Activated B cell treated with CpG ODN at 0.5 μM for 24 hours (primary cell): ENCODE measurements at regions of chr6 and their contacts with region 1.

Region 1: DNA sequence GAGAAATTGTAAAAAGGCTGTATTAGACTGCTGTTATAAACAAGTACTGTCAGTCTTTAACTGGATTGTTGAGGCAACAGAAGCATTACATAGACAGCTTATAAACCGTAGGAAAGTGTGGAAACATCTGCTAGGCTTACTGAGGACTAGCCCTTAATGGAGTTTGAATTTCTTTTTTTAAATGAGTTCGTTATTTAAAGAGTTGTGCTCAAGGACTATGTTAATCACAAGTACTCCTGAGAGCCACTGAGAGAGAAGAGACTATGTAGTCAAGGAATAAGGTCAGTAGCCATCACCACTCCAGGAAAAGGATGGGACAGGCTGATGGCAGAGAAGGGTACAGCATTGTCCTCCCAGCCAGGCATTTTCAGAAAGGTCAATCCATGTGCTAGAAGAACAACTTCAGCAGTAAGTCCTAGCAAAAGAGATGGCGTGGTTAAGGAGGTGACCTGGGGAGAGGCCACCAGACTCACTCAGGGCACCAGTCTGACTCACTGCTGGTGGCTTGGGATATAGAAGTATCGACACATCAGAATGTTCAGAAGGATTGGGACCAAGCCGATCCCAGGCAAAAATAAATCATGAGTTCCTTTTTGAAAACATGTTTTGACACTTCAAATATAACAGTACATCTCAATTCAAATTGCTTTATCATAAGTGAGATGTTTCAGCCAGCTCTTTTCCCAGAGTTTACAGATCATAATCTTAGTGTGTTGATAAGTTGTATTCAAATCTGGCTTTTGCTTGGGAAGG is 6.4 kb downstream of the RPS12 start:
- DNase-seq: no peak
- ATAC-seq: no peak
- H3K4me3 Mint-ChIP-seq: no peak overlapping the region
- H3K27ac Mint-ChIP-seq: peak overlapping the region; percentile 99
- H3K4me1 Mint-ChIP-seq: peaks cover 48% of the 10 kb centered on the region
- H3K27me3 Mint-ChIP-seq: no peaks in the 10 kb centered on the region
- CTCF ChIP-seq: no peak

Region 2: DNA sequence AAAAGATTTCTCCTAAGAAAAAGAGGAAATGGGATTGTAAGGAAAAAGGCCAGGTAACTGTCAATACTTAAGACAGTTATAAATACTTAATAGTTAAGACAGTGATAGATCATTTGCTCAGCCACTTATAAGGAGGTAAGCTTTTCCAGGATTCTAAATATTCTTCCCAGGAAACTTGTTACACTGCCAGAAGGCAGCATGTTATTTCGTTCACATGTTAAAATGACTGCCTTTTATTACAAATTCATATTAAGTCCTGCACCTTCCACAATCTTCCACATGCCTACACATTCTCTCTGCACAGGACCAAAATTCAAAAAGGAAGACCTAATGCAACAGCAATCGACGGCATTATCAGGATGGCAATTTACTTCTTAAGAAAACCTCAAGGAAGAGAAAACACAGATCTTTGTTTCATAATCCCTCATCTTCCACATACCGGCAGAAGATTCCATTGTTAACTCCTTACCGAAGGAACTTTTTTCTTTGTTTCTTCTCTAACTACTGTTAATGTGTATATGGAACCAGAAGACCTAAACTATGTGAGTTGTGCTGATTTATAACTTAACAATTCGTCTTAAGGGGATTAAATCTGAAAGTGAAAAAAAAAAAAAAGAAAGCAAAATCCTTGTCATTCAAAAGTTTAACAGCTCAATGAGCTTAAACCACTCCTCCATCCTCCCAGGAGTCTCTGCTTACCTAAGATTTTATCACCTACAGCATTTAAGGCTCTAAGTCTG is 197.5 kb before region 1 on chr6:
- CTCF ChIA-PET with region 1: no interaction called
- POLR2A ChIA-PET with region 1: interaction called, 10 read pairs
- intact Hi-C with region 1: no loop called
- DNase-seq: no peak
- ATAC-seq: no peak
- H3K4me3 Mint-ChIP-seq: no peak overlapping the region
- H3K27ac Mint-ChIP-seq: no peak overlapping the region
- H3K4me1 Mint-ChIP-seq: no peaks in the 10 kb centered on the region
- H3K27me3 Mint-ChIP-seq: peaks cover 14% of the 10 kb centered on the region
- CTCF ChIP-seq: no peak

Region 3: GRCh38 chr6:132962936-132963868 is 142.4 kb after region 1 on chr6:
- CTCF ChIA-PET with region 1: no interaction called
- POLR2A ChIA-PET with region 1: no interaction called
- intact Hi-C with region 1: loop called (anchors 2 kb)
- DNase-seq: peak; percentile 19
- ATAC-seq: peak; percentile 69
- H3K4me3 Mint-ChIP-seq: no peak overlapping the region
- H3K27ac Mint-ChIP-seq: no peak overlapping the region
- H3K4me1 Mint-ChIP-seq: no peaks in the 10 kb centered on the region
- H3K27me3 Mint-ChIP-seq: peaks cover 24% of the 10 kb centered on the region
- CTCF ChIP-seq: peak; percentile 56

Region 4: GRCh38 chr6:133040094-133040802 is 219.4 kb after region 1 on chr6:
- CTCF ChIA-PET with region 1: no interaction called
- POLR2A ChIA-PET with region 1: no interaction called
- intact Hi-C with region 1: loop called (anchors 2 kb)
- DNase-seq: no peak
- ATAC-seq: no peak
- H3K4me3 Mint-ChIP-seq: no peak overlapping the region
- H3K27ac Mint-ChIP-seq: no peak overlapping the region
- H3K4me1 Mint-ChIP-seq: no peaks in the 10 kb centered on the region
- H3K27me3 Mint-ChIP-seq: peaks cover 2% of the 10 kb centered on the region
- CTCF ChIP-seq: no peak

Region 5: DNA sequence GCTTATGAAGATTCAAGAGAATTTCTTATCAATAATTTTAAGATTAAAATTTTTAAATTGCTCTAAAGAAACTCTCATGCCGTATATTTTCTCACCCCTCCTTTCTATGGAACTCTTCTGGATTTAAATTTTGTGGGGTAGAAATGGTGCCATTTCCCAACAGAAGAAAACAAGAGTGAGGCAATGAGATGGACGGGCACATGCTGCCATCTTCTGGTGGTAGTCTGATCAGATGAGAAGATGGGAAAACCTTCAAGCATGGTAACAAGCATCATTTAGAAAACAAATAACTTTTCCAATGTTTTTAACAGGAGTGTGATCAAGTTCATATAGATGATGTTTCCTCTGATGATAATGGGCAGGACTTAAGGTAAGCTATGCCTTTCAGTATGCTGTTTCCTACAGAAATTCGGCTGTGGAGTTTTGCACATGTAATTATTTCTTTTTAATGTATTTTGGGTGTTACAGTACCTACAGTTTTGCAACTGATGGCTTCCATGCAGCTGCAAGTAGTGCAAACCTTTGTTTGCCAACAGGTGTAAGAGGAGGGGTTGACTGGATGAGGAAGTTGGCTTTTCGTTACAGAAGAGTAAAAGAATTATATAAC is 691.7 kb after region 1 on chr6:
- CTCF ChIA-PET with region 1: no interaction called
- POLR2A ChIA-PET with region 1: no interaction called
- intact Hi-C with region 1: loop called (anchors 2 kb)
- DNase-seq: no peak
- ATAC-seq: no peak
- H3K4me3 Mint-ChIP-seq: no peak overlapping the region
- H3K27ac Mint-ChIP-seq: no peak overlapping the region
- H3K4me1 Mint-ChIP-seq: no peaks in the 10 kb centered on the region
- H3K27me3 Mint-ChIP-seq: peaks cover 10% of the 10 kb centered on the region
- CTCF ChIP-seq: no peak

Region 6: DNA sequence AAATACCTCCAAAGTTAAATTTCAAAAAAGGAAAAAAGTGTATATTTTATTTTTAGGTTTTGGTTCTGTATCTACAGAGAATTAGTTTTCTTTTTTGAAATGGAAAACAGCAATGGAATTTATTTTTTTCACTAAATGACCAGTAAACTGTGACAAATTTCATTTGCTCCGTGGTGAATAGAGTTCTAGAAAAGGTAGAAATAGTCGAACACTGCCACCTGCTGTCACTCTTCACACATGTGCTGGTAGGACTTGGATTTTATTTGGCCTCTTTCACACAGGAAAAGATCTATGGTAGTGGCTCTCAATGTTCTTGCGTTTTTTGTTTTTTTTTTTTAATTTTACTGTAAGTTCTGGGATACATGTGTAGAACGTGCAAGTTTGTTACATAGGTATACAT is 732.8 kb after region 1 on chr6:
- CTCF ChIA-PET with region 1: no interaction called
- POLR2A ChIA-PET with region 1: no interaction called
- intact Hi-C with region 1: loop called (anchors 1 kb)
- DNase-seq: no peak
- ATAC-seq: no peak
- H3K4me3 Mint-ChIP-seq: no peak overlapping the region
- H3K27ac Mint-ChIP-seq: no peak overlapping the region
- H3K4me1 Mint-ChIP-seq: no peaks in the 10 kb centered on the region
- H3K27me3 Mint-ChIP-seq: peaks cover 7% of the 10 kb centered on the region
- CTCF ChIP-seq: no peak

Region 7: DNA sequence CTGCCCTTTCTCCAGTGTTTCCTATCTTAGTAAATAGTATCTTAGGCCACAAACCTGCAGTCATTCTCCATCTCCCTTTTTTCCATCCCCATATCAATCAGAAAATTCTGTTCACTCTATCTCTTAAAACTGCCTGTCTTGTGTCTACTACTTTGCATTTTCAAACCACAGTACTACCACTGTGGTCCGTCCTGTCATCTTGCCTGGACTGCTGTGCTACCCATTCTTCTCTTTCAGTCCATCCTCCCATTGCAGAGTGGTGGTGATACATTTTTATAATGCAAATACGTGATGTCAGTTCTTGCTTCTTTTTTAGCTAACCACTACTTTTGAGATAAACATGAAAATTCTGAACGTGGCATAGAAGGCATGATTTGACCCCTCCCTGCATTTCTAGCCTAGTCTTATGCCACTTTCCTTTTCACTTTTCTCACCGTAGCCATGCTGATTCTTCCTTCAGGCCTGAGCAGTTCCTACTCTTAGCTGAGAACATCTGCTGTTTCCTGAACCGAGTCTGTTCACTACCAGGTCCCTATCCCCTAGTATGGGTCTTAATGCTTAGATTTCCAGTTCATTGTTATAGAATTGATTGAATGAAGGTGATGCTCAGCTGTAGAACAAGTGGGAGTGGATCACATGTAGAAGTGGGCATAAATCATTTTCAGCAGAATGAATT is 1146.0 kb after region 1 on chr6:
- CTCF ChIA-PET with region 1: no interaction called
- POLR2A ChIA-PET with region 1: no interaction called
- intact Hi-C with region 1: no loop called
- DNase-seq: no peak
- ATAC-seq: peak; percentile 91
- H3K4me3 Mint-ChIP-seq: peak overlapping the region; percentile 56
- H3K27ac Mint-ChIP-seq: peak overlapping the region; percentile 75
- H3K4me1 Mint-ChIP-seq: peaks cover 58% of the 10 kb centered on the region
- H3K27me3 Mint-ChIP-seq: no peaks in the 10 kb centered on the region
- CTCF ChIP-seq: no peak